PC-9 (cell line): ENCODE measurements at regions of chr17 and their contacts with region 1.

Region 1: DNA sequence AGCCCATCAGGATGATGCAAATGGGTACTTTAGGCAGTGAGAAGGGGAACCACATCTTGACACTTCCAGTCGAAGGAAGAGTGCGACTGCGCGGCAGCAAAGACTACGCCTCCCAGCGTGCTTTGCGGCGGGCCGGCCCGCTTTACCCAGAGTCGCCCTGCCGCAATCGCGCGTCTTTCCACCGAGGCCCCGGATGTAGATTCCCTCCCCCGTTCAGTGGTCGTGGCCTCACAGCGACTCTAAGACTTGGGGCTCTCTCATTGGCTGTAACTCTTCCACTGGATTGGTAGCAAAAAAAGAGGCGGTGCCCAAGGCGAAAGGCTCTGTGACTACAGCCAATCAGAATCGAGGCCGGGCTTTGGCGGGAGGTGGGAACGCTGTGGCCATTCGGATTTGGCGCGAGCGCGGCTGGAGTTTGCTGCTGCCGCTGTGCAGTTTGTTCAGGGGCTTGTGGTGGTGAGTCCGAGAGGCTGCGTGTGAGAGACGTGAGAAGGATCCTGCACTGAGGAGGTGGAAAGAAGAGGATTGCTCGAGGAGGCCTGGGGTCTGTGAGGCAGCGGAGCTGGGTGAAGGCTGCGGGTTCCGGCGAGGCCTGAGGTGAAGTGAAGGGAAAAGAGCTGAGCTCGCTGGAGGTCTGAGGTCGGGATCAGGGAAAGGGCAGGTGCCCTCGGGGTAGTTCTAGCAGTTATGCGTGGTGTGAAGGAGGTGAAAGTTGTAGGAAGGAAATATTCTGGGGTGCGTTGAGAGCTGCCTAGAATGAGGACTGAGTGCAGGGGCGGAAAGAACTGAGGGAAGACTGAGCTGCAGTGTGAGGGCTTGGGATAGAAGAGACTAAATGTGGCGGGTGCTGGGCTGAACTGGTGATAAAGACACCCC is at the start of gene CDC6:
- DNase-seq: peak; percentile 94 to 98
- H3K4me3 ChIP-seq: peak within 1 kb of the TSS; percentile 87
- H3K27ac ChIP-seq: peak within 1 kb of the TSS; percentile 66
- H3K4me1 ChIP-seq: peaks cover 60% of the 10 kb centered on the region
- H3K27me3 ChIP-seq: no peaks in the 10 kb centered on the region
- CTCF ChIP-seq: no peak
- total RNA-seq, gene CDC6: 37.8 and 44.9 TPM in 2 replicates

Region 2: GRCh38 chr17:40168262-40168832 is 119.4 kb before region 1 on chr17:
- CTCF ChIA-PET with region 1: interaction called, 5 read pairs
- POLR2A ChIA-PET with region 1: no interaction called
- intact Hi-C with region 1: loop called (anchors 1 kb)
- DNase-seq: peak; percentile 50 to 92
- H3K4me3 ChIP-seq: no peak overlapping the region
- H3K27ac ChIP-seq: no peak overlapping the region
- H3K4me1 ChIP-seq: peaks cover 6% of the 10 kb centered on the region; the same call in 1 of the 2 replicates
- H3K27me3 ChIP-seq: no peaks in the 10 kb centered on the region
- CTCF ChIP-seq: peak; percentile 90

Region 3: GRCh38 chr17:40203131-40203530 is 84.6 kb before region 1 on chr17:
- CTCF ChIA-PET with region 1: no interaction called
- POLR2A ChIA-PET with region 1: no interaction called
- intact Hi-C with region 1: loop called (anchors 1 kb)
- DNase-seq: no peak
- H3K4me3 ChIP-seq: no peak overlapping the region
- H3K27ac ChIP-seq: no peak overlapping the region
- H3K4me1 ChIP-seq: no peaks in the 10 kb centered on the region
- H3K27me3 ChIP-seq: no peaks in the 10 kb centered on the region
- CTCF ChIP-seq: no peak

Region 4: DNA sequence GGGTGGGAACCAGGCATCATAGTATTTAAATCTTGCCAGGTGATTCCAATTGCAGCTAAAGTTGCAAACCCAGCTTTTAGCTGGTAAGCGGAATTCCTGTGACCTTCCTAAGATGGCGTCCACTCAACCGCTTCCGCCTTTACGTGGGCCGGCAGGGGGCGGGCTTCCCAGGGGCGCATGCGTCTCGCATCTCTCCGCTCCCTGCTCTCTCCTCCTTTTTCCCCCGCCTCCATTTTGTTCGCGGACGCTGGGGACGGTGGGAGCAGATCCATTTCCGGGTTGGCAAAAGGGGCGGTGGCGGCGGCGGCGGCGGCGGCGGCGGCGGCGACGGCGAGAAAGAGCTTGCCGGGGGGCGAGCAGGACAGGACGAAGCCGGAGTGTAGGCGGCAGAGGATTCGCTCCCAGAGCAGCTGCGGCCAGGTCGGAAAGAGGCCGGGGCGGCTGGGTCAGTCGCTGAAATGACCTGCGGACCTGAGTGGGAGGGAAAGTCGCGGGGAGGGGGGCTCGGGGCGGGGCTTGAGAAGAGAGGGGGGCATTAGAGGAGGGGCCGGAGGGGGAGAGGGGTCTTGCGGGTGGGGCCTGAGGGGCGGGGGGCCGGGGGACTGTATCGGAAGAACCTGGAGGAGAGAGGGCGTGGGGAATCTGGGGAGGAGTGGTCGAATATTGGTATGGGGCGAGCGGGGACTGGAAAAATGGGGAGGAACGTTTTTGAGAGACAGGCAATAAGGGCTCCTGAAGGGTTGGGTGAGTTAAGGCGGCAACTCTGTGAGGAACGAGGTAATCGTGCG is 68.5 kb before region 1 on chr17 and contains the start of gene WIPF2:
- CTCF ChIA-PET with region 1: interaction called, 8 read pairs
- POLR2A ChIA-PET with region 1: interaction called, 9 read pairs
- intact Hi-C with region 1: loop called (anchors 2 kb)
- DNase-seq: peak; percentile 87 to 92
- H3K4me3 ChIP-seq: peak within 1 kb of the TSS; percentile 68
- H3K27ac ChIP-seq: peak within 1 kb of the TSS; percentile 87
- H3K4me1 ChIP-seq: peaks cover 11% of the 10 kb centered on the region; the same call in 1 of the 2 replicates
- H3K27me3 ChIP-seq: no peaks in the 10 kb centered on the region
- CTCF ChIP-seq: peak; percentile 86
- total RNA-seq, gene WIPF2: 23.4 and 37.2 TPM in 2 replicates

Region 5: DNA sequence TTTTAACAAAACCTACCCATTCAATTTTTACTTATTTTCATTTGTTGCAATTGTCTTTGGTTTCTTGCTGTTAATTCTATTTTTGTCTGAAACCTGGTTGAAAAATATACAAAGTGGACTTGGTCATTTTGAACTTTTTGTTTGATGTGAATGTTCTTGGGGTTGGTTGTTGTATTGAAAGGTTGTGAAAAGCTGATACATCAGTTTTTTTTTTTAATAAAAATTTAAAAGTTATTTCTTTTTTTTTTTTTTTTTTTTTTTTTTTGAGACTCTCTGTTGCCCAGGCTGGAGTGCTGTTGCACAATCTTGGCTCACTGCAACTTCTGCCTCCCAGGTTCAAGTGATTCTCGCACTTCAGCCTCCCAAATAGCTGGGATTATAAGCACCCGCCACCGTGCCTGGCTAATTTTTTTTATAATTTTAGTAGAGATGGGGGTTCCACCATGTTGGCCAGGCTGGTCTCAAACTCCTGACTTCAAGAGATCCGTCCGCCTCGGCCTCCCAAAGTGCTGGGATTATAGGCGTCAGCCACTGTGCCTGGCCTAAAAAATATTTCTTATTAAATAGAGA is 39.7 kb before region 1 on chr17:
- CTCF ChIA-PET with region 1: no interaction called
- POLR2A ChIA-PET with region 1: interaction called, 16 read pairs
- intact Hi-C with region 1: no loop called
- DNase-seq: no peak
- H3K4me3 ChIP-seq: no peak overlapping the region
- H3K27ac ChIP-seq: no peak overlapping the region
- H3K4me1 ChIP-seq: peaks cover 6% of the 10 kb centered on the region; the same call in 1 of the 2 replicates
- H3K27me3 ChIP-seq: no peaks in the 10 kb centered on the region
- CTCF ChIP-seq: no peak

Region 6: GRCh38 chr17:40317880-40318829 is 30.4 kb after region 1 on chr17:
- CTCF ChIA-PET with region 1: interaction called, 10 read pairs
- POLR2A ChIA-PET with region 1: no interaction called
- intact Hi-C with region 1: no loop called
- DNase-seq: peak; percentile 88 to 90
- H3K4me3 ChIP-seq: peak overlapping the region; percentile 99
- H3K27ac ChIP-seq: peak overlapping the region; percentile 75
- H3K4me1 ChIP-seq: peaks cover 85% of the 10 kb centered on the region
- H3K27me3 ChIP-seq: no peaks in the 10 kb centered on the region
- CTCF ChIP-seq: no peak